PC-3 (cell line): ENCODE measurements at regions of chr3 and their contacts with region 1.

Region 1: DNA sequence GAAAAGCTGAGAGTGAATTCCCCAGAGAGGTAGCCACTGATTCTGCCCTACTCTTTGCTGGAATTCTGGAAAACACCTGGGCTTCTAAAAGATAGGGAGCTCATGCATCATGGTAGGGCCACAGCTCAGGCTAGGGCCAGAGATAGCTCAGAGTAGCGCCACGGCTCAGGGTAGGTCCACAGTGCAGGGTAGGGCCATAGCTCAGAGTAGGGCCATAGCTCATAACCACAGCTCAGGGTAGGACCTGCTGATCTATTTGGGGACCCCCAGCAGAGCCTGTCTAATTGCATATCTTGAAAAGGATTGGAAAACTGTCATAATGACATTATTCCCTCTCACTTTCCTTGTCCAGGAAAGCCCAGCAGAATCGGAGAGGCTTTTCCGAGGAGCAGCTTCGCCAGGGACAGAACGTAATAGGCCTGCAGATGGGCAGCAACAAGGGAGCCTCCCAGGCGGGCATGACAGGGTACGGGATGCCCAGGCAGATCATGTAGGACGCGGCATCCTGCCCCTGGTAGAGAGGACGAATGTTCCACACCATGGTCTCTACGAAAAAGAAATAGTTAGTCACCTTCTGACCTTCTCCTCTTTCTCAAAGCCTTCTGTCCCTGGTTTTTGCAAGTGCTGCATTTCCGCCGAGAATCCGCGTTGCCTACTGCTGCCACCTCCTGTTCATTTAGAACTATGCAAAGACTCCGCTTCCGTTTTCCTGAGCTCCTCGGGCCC is 14.5 kb downstream of the TAGLN3 start:
- DNase-seq: peak; percentile 86
- ATAC-seq: peak; percentile 85
- H3K4me3 ChIP-seq: no peak overlapping the region
- H3K27ac ChIP-seq: no peak overlapping the region
- H3K4me1 ChIP-seq: 0 out of 2 replicates have a peak, but pooled peaks cover 5% of the 10 kb centered on the region
- H3K27me3 ChIP-seq: no peaks in the 10 kb centered on the region
- CTCF ChIP-seq: peak; percentile 85

Region 2: DNA sequence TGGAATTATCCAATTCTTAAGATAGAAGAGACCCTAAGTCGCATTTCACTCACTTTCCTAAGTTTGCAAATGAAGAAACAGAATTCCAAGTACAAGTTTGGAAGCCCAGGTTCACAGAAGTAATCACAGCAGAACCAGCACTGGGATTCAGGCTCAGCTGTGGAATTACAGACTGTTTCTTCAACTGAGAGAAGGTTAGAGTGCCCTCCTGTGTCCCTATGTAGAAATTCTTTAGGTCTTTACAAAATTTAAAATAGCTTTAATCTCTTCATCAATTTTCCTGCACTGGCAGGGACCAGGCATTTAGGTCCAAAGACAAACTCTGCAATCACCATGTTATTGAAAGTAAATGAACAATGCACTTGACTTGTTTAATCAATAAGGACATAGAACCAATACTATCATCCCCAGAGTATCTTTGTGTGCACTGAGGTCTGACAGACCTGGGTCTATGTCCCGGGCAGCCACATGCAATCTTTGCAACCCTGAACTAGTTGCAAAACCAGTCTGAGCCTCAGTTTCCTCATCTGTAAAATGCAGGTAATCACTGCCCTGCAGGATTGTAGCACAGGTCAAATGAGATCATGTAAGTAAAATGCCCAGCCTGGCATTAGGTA is 321.8 kb before region 1 on chr3:
- CTCF ChIA-PET with region 1: no interaction called
- POLR2A ChIA-PET with region 1: no interaction called
- intact Hi-C with region 1: no loop called
- DNase-seq: peak; percentile 73
- ATAC-seq: peak; percentile 52
- H3K4me3 ChIP-seq: no peak overlapping the region
- H3K27ac ChIP-seq: no peak overlapping the region
- H3K4me1 ChIP-seq: peaks cover 41% of the 10 kb centered on the region
- H3K27me3 ChIP-seq: no peaks in the 10 kb centered on the region
- CTCF ChIP-seq: peak; percentile 88

Region 3: DNA sequence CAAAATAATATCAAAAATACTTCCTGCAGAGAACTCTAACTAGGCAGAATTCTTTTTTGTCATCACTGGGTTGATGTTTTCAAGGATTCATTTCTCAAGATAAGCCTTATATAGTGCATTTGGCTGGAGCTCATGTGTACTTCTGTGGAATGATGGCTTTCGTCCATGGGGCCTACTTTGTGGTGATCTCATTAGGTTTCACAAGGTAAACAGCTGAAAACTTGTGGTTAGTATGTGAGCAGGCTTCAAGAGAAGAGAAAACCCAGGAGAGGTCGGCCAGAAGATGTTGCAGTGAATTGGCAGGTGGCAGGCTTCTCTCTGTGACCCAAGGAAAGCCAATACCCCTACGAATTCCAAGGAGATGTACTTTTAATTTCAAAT is 275.5 kb before region 1 on chr3:
- CTCF ChIA-PET with region 1: no interaction called
- POLR2A ChIA-PET with region 1: no interaction called
- intact Hi-C with region 1: no loop called
- DNase-seq: peak; percentile 96
- ATAC-seq: peak; percentile 60
- H3K4me3 ChIP-seq: no peak overlapping the region
- H3K27ac ChIP-seq: peak overlapping the region; percentile 74
- H3K4me1 ChIP-seq: peaks cover 65% of the 10 kb centered on the region
- H3K27me3 ChIP-seq: no peaks in the 10 kb centered on the region
- CTCF ChIP-seq: no peak

Region 4: GRCh38 chr3:111895079-111895478 is 118.1 kb before region 1 on chr3:
- CTCF ChIA-PET with region 1: interaction called, 9 read pairs
- POLR2A ChIA-PET with region 1: no interaction called
- intact Hi-C with region 1: loop called (anchors 1 kb)
- DNase-seq: peak; percentile 80
- ATAC-seq: peak; percentile 79
- H3K4me3 ChIP-seq: no peak overlapping the region
- H3K27ac ChIP-seq: no peak overlapping the region
- H3K4me1 ChIP-seq: peaks cover 25% of the 10 kb centered on the region
- H3K27me3 ChIP-seq: no peaks in the 10 kb centered on the region
- CTCF ChIP-seq: peak; percentile 79

Region 5: DNA sequence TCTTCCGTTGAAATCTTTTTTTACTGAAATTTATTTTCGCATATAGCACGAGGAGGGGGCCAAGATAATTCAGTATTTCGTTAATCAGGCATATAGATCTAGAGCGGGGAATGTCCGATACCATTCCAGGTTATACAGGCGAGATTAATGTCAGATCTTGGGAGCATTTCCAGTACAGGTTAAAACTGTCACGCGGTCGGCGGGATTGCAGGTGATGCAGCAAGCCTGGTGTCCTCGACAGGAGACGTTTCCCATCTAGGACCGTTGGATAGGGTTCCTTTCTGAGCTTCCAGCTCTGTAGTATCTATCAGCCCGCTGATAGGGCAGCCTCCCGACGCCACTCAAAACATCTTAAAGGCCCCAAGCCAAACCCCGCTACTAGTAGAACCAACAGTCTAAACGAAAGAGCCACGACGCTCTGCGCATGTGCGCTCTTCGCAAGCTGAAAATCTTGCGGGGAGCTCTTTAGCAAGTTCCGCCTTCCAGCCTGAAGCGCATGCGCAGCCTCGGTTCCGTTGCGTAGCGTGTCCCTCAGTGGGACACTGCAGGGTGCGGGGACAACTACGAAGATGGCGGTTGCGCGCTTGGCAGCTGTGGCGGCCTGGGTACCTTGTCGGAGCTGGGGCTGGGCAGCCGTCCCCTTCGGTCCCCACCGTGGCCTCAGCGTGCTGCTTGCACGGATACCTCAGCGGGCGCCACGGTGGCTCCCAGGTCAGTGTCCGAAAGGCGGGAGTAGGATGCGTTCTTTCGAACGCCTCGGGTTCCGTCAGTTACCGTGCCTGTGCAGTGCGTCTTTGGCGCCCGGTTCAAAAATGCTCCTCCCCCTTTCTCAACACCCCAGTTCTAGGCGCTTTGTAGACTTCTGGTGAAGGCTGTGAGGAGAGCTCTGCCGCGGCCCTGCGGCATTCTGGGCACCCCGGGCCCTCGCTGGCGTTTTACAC is 34.5 kb before region 1 on chr3 and contains the start of gene ABHD10:
- CTCF ChIA-PET with region 1: interaction called, 28 read pairs
- POLR2A ChIA-PET with region 1: no interaction called
- intact Hi-C with region 1: no loop called
- DNase-seq: peak; percentile 100
- ATAC-seq: peak; percentile 90
- H3K4me3 ChIP-seq: peak within 1 kb of the TSS; percentile 80
- H3K27ac ChIP-seq: peak within 1 kb of the TSS; percentile 36
- H3K4me1 ChIP-seq: peaks cover 28% of the 10 kb centered on the region
- H3K27me3 ChIP-seq: no peaks in the 10 kb centered on the region
- CTCF ChIP-seq: no peak
- total RNA-seq, gene ABHD10: 29.1 and 45.0 TPM in 2 replicates

Region 6: DNA sequence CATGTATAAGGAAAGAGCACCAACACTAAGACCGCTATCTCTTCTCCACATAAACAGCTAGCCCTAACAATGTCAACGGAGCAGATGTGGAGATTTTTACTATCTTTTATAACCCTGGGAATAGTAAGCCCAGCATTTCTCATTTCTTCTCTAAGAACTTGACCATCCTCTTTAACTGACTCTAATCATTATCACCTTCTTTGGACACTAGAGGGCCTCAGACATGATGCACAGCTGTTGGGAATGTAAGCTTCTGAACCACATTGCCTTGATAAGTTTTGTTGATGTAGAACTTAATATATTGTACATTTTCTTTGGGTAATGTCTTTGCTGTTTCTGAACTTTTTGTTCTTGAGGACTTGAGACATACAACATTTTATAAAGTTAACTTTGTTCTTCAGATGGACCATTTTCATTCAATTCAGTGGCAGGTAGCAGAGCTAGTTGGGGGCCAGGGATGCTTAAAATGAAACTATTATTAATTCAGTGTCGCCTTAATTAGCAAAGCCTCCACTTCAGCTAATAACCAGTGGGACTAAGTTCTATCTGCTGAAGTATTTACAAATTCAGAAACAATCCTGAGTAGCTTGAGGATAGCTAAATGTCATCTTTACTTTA is 24.1 kb before region 1 on chr3:
- CTCF ChIA-PET with region 1: interaction called, 46 read pairs
- POLR2A ChIA-PET with region 1: no interaction called
- intact Hi-C with region 1: loop called (anchors 1 kb)
- DNase-seq: peak; percentile 82
- ATAC-seq: peak; percentile 96
- H3K4me3 ChIP-seq: no peak overlapping the region
- H3K27ac ChIP-seq: no peak overlapping the region
- H3K4me1 ChIP-seq: no peaks in the 10 kb centered on the region; the same call in 1 of the 2 replicates
- H3K27me3 ChIP-seq: no peaks in the 10 kb centered on the region
- CTCF ChIP-seq: peak; percentile 94

Region 7: GRCh38 chr3:111998636-111999483 is 14.4 kb before region 1 on chr3 and contains the start of gene TAGLN3:
- CTCF ChIA-PET with region 1: interaction called, 14 read pairs
- POLR2A ChIA-PET with region 1: no interaction called
- intact Hi-C with region 1: no loop called
- DNase-seq: peak; percentile 33
- ATAC-seq: peak; percentile 54
- H3K4me3 ChIP-seq: peak within 1 kb of the TSS; percentile 65
- H3K27ac ChIP-seq: no peak within 1 kb of the TSS
- H3K4me1 ChIP-seq: peaks cover 31% of the 10 kb centered on the region
- H3K27me3 ChIP-seq: no peaks in the 10 kb centered on the region
- CTCF ChIP-seq: no peak
- total RNA-seq, gene TAGLN3: 2.6 and 4.3 TPM in 2 replicates

Region 8: DNA sequence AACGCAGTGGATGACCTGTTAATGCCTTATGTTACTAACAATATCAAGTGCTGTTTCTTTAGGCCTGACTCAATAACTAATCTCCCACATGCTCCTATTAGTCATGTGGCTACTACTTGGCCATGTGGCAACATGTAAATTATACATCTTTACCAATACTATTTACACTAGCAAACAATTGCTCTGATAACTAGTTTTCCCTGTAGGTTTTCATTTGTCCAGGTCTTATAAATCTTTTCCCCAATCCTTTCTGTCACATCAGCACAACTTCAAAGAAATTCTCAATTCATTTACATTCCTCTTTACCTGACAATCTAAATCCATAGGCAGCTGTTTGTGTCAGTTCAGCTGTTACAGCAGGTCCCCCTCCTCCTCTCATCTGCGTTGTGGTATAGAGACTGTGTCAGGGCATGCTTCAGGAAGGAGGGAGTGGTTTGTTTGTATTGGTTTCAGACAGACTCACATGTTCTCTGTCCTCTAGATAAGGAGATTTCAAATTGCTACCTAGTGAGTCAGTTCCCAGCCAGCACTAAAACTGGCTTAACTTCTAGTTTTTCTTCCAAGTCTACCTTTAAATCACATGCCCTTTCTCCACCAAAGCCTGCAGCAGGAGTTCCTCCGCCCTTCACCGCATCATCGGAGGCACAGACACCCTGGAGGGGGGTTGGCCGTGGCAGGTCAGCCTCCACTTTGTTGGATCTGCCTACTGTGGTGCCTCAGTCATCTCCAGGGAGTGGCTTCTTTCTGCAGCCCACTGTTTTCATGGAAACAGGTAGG is 61.7 kb after region 1 on chr3:
- CTCF ChIA-PET with region 1: no interaction called
- POLR2A ChIA-PET with region 1: no interaction called
- intact Hi-C with region 1: no loop called
- DNase-seq: peak; percentile 98
- ATAC-seq: peak; percentile 96
- H3K4me3 ChIP-seq: peak overlapping the region; percentile 60
- H3K27ac ChIP-seq: peak overlapping the region; percentile 99
- H3K4me1 ChIP-seq: peaks cover 36% of the 10 kb centered on the region
- H3K27me3 ChIP-seq: no peaks in the 10 kb centered on the region
- CTCF ChIP-seq: no peak

Region 9: GRCh38 chr3:112104774-112105173 is 91.6 kb after region 1 on chr3:
- CTCF ChIA-PET with region 1: no interaction called
- POLR2A ChIA-PET with region 1: no interaction called
- intact Hi-C with region 1: no loop called
- DNase-seq: no peak
- ATAC-seq: no peak
- H3K4me3 ChIP-seq: no peak overlapping the region
- H3K27ac ChIP-seq: no peak overlapping the region
- H3K4me1 ChIP-seq: peaks cover 34% of the 10 kb centered on the region
- H3K27me3 ChIP-seq: no peaks in the 10 kb centered on the region
- CTCF ChIP-seq: no peak